Activated T-helper 2 cell treated with anti-CD3 and anti-CD28 coated beads, Interferon-gamma antibody, Interleukin-2, Interleukin-4, amounts not matched to agents 10 μg/mL and 5 μg/mL and 100 μg/mL, durations not matched to agents 14 hours and 24 hours and 36 hours (primary cell): ENCODE measurements at regions of chr7 and their contacts with region 1.

Region 1: GRCh38 chr7:107661081-107661864 is 645 bp downstream of the SLC26A4 start:
- DNase-seq: peak; percentile 54
- H3K4me3 Mint-ChIP-seq: peak overlapping the region; percentile 94
- H3K27ac Mint-ChIP-seq: peak overlapping the region; percentile 82
- H3K4me1 Mint-ChIP-seq: peaks cover 39% of the 10 kb centered on the region
- H3K27me3 Mint-ChIP-seq: no peaks in the 10 kb centered on the region

Region 2: DNA sequence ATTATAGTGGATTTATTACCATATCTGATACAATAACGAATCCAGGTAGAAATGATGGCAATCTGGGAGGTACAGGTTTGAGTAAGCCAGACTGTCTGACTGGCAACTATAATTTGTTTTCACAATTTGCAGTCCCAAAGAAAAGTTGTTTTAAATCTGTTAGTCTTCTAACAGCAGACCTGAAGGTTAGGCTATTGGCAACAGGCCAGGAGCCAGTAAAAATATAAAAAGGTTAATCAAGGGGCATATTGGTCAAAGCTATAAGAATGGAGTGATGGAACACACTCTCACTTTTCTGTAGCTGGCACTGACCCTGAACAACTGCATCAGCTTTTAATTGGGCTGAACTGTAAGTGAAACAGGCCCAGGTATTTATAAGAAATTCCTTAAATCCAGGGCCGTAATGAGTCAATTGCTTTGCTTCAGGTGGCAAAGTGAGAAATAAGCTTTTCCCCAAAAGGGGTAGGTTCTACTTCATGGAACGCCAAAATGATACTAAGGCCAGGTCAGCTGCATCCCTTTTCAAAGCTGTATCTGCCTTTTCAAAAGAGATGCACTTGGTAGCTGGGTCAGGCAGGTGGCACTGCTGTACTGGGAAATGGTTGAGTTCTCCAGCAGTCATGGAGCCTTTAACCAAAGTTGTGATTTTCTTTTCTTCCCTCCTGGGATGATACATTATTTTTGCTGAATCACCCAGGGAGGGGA is 198.4 kb before region 1 on chr7:
- intact Hi-C with region 1: loop called (anchors 5 kb)
- DNase-seq: peak; percentile 22
- H3K4me3 Mint-ChIP-seq: no peak overlapping the region
- H3K27ac Mint-ChIP-seq: no peak overlapping the region
- H3K4me1 Mint-ChIP-seq: no peaks in the 10 kb centered on the region
- H3K27me3 Mint-ChIP-seq: no peaks in the 10 kb centered on the region

Region 3: GRCh38 chr7:107579885-107580715 is 81.2 kb before region 1 on chr7 and contains the start of gene BCAP29:
- intact Hi-C with region 1: loop called (anchors 1 kb)
- DNase-seq: peak; percentile 68
- H3K4me3 Mint-ChIP-seq: peak within 1 kb of the TSS; percentile 90
- H3K27ac Mint-ChIP-seq: peak within 1 kb of the TSS; percentile 85
- H3K4me1 Mint-ChIP-seq: peaks cover 27% of the 10 kb centered on the region
- H3K27me3 Mint-ChIP-seq: no peaks in the 10 kb centered on the region
- total RNA-seq, gene BCAP29: 46.6 and 52.0 TPM in 2 replicates

Region 4: DNA sequence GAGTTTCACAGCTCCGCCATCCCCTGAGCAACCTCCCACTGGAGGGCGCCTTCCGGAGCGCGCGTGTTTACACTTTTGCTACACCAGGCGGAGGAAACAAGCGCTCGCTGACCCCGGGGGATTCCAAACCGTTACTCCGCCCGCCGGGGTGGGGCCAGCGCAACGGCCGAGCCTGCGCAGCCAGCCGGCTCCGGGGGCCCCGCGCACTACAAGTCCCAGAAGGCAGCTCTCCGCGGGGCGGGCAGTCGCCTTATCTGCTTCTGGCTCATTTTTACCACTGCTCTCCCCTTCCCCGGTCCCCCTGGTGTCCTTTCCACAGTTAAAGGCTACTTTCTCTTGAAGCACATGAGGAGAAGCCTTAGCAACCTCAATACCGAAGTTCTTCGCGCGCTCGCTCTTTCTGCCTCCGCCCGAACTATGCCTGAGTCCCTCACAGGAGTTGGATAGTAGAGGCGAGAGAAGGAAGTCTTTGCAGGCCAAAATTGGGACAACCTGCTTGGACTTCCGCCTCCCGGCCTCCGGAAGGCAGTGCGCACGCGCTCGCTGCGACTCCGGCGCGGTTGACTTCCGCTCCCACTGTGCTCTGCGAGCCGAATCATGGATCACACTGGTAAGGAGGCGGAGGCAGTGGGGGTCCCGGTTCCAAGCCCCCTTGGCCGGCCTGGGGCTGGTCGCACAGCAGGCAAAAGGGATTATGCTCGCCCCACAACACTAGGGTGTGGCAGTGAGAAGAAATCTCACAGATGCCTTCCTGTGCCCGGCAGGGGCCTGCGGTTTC is 82.5 kb after region 1 on chr7 and contains the start of gene CBLL1:
- intact Hi-C with region 1: loop called (anchors 1 kb)
- DNase-seq: peak; percentile 98
- H3K4me3 Mint-ChIP-seq: peak within 1 kb of the TSS; percentile 96
- H3K27ac Mint-ChIP-seq: peak within 1 kb of the TSS; percentile 100
- H3K4me1 Mint-ChIP-seq: peaks cover 33% of the 10 kb centered on the region
- H3K27me3 Mint-ChIP-seq: peaks cover 4% of the 10 kb centered on the region
- total RNA-seq, gene CBLL1: 39.1 and 43.7 TPM in 2 replicates

Region 5: GRCh38 chr7:107816011-107816566 is 154.8 kb after region 1 on chr7:
- intact Hi-C with region 1: loop called (anchors 1 kb)
- DNase-seq: no peak
- H3K4me3 Mint-ChIP-seq: no peak overlapping the region
- H3K27ac Mint-ChIP-seq: peak overlapping the region; percentile 75
- H3K4me1 Mint-ChIP-seq: peaks cover 21% of the 10 kb centered on the region
- H3K27me3 Mint-ChIP-seq: peaks cover 2% of the 10 kb centered on the region

Region 6: DNA sequence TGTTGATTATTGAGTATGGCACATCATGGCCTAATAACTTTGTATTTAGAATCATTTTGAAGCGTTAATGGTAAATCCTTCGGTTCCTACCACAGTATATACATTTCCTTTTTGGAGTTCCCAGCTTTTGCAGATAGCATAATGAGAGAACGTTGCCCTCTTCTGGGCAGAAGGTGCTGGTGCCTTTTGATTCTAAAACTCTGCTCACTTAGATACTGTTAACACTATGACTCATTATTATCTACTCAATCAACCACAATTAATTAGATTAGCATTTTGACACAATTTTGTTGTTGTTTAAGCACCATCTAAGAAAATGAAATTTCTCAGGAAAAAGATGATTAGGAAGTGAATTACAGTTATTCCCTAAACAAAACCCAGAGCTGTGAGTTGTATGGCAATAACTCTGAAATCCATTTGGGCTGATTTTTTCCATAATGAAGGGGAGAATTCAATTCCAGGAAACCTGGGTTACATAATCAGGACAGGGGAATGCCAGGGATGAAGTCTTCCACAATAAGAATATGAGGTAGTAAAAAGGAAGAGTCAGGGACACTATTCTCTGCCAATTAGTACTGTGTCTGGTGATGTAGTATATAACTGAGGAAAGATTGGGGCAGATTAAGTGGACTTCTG is 218.2 kb after region 1 on chr7:
- intact Hi-C with region 1: loop called (anchors 5 kb)
- DNase-seq: no peak
- H3K4me3 Mint-ChIP-seq: no peak overlapping the region
- H3K27ac Mint-ChIP-seq: no peak overlapping the region
- H3K4me1 Mint-ChIP-seq: peaks cover 27% of the 10 kb centered on the region
- H3K27me3 Mint-ChIP-seq: peaks cover 29% of the 10 kb centered on the region

Region 7: DNA sequence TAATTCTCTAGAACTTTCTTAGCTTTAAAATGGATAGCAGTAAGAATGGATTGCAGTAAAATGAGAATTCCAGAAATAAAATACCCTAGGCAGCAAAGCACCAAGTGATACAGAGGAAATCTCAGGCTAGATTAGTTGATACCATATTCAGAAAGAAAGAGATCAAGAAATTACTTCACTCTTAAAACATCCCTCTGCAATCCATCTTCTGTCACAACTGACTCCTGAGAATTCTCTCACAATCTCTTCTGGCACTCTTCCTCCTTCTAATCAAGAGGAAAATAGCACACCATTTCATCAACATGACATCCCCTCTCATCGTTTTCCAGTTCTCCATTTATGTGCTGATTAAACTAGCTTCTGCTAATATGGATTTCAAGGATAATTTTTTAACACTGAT is 383.9 kb after region 1 on chr7:
- intact Hi-C with region 1: no loop called
- DNase-seq: no peak
- H3K4me3 Mint-ChIP-seq: no peak overlapping the region
- H3K27ac Mint-ChIP-seq: no peak overlapping the region
- H3K4me1 Mint-ChIP-seq: no peaks in the 10 kb centered on the region
- H3K27me3 Mint-ChIP-seq: peaks cover 21% of the 10 kb centered on the region